T-cell (primary cell): ENCODE measurements at regions of chr13 and their contacts with region 1.

Region 1: DNA sequence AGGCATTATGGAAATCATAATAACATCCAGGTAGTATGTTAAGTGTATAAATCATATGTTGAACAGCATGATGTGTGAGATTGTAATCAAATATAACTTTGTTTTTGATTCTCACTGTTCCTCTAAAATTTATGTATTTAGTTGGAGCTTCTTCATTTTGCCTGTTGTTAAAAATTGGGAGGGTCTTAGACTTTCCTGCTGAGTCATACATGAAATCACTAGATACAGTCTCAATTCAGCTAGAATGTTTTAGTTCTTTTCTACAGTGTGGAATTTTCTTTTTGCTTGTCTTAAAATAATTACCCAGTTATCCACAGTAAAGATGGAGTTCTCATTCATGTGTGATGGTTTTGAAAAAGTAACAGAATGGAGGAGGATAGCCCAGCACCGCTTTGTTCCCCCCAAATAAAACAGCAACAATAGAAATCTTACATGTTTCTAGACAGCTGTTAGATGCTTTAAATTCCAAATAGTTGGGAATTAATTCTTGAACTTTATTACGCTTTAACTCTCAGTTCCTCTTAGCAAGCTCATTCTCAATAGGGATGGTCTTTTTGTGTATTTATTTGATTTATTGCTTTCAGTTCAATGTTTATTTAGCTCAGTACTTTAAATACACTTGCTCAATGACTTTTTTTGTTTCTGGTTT is 109.5 kb downstream of the PDS5B start:
- DNase-seq: no peak
- ATAC-seq: no peak
- H3K4me3 ChIP-seq: no peak overlapping the region
- H3K4me3 Mint-ChIP-seq: no peak overlapping the region
- H3K27ac ChIP-seq: no peak overlapping the region
- H3K27ac Mint-ChIP-seq: peak overlapping the region in 1 of 2 donors; percentile 50
- H3K4me1 ChIP-seq: no peaks in the 10 kb centered on the region
- H3K4me1 Mint-ChIP-seq: no peaks in the 10 kb centered on the region
- H3K27me3 ChIP-seq: no peaks in the 10 kb centered on the region
- H3K27me3 Mint-ChIP-seq: no peaks in the 10 kb centered on the region

Region 2: GRCh38 chr13:32624441-32624840 is 71.3 kb before region 1 on chr13:
- CTCF ChIA-PET with region 1: interaction called in 1 of 2 experiments, 10 read pairs
- POLR2A ChIA-PET with region 1: no interaction called
- DNase-seq: no peak
- ATAC-seq: no peak
- H3K4me3 ChIP-seq: no peak overlapping the region
- H3K4me3 Mint-ChIP-seq: no peak overlapping the region
- H3K27ac ChIP-seq: no peak overlapping the region
- H3K27ac Mint-ChIP-seq: no peak overlapping the region
- H3K4me1 ChIP-seq: peaks cover 0 to 3% of the 10 kb centered on the region in 2 experiments
- H3K4me1 Mint-ChIP-seq: peaks cover 42 to 57% (median 52%) of the 10 kb centered on the region in 3 donors
- H3K27me3 ChIP-seq: no peaks in the 10 kb centered on the region
- H3K27me3 Mint-ChIP-seq: no peaks in the 10 kb centered on the region

Region 3: DNA sequence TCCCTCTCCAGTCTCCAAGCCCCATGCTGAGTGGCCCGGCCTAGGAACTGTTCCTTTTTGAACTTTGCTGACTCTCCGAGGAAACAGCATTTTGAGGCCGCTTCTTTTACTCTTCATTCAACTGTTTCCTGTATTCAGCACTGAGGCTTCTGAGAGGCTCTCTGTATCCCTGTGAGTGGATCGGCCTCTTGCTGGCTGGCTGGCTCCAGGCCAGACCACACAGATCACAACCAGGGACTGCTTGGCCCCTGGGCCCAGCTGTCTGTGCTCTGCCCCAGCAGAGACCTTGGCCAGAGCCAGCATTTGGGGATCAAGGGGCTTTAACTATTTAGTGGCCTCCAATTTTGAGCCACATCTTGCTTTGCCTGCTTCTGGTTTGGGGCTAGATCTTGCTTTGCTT is 244.9 kb after region 1 on chr13:
- CTCF ChIA-PET with region 1: interaction called in 1 of 2 experiments, 20 read pairs
- POLR2A ChIA-PET with region 1: no interaction called
- DNase-seq: no peak
- ATAC-seq: no peak
- H3K4me3 ChIP-seq: no peak overlapping the region
- H3K4me3 Mint-ChIP-seq: no peak overlapping the region
- H3K27ac ChIP-seq: no peak overlapping the region
- H3K27ac Mint-ChIP-seq: no peak overlapping the region
- H3K4me1 ChIP-seq: peaks cover 3 to 6% of the 10 kb centered on the region in 2 experiments
- H3K4me1 Mint-ChIP-seq: peaks cover 10 to 19% (median 16%) of the 10 kb centered on the region in 3 donors
- H3K27me3 ChIP-seq: no peaks in the 10 kb centered on the region
- H3K27me3 Mint-ChIP-seq: peaks cover 6 to 13% of the 10 kb centered on the region in 2 donors